Psoas muscle (tissue), 8 donors: ENCODE measurements at regions of chr21 and their contacts with region 1.

Region 1: DNA sequence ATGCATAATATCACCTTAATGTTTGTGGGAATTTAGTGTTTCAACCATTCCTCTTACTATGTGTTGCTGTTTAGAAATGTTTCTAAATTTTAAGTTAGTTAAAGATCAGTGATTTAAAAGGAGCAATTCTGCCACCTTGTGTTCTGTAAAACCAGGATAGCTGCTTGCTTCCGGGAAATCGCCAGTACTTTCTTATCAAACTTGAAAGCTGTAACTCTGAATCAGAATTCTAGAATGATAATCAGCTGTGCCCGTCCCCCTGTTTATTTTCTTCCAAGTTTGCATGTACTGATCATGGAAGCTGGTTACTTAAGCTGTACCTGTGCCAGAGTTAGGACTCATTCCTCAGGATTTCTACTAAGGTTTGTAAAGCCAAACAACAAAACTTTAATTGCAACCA is 656.4 kb downstream of the LTN1 start:
- DNase-seq: no peak
- ATAC-seq: peak in 3 of 4 donors; percentile 38 to 69 (median 43)
- H3K4me3 ChIP-seq: no peak overlapping the region
- H3K27ac ChIP-seq: no peak overlapping the region
- H3K4me1 ChIP-seq: peaks cover 5% of the 10 kb centered on the region
- H3K27me3 ChIP-seq: no peaks in the 10 kb centered on the region
- CTCF ChIP-seq: peak; percentile 61

Region 2: GRCh38 chr21:26850108-26850643 is 1486.1 kb before region 1 on chr21:
- intact Hi-C with region 1: loop called (anchors 2 to 5 kb)
- DNase-seq: no peak
- ATAC-seq: no peak
- H3K4me3 ChIP-seq: peak overlapping the region; percentile 35
- H3K27ac ChIP-seq: no peak overlapping the region
- H3K4me1 ChIP-seq: peaks cover 6% of the 10 kb centered on the region
- H3K27me3 ChIP-seq: no peaks in the 10 kb centered on the region
- CTCF ChIP-seq: peak; percentile 64

Region 3: DNA sequence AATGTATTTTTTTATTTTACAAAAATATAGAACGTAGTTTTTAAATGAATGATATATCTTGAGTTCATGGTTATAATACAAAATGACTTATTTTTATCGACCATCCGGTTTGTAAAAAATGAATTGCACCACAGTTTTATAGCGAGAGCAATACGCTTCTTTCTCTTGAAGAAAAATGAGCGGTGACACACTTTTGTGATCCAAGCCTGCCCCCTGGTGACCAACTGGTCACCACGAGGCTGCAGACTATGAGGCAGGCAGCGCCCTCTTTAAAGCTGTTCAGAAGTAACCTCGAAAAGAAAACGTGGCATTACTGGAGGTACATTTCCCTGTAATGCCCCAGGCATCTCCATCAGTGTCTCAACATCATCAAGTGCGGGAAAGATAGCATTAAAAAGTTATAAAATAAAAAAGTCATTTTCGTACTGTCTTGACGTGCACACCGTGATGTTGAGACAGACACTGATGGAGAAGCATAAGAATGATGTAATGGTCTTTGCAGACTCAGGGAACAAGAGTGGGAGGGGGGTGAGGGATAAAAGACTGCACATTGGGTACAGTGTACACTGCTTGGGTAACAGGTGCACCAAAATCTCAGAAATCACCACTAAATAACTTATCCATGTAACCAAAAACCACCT is 635.2 kb before region 1 on chr21:
- intact Hi-C with region 1: loop called in 1 of 2 experiments (anchors 5 kb)
- DNase-seq: peak; percentile 83 to 88
- ATAC-seq: peak; percentile 86 to 99 (median 93)
- H3K4me3 ChIP-seq: no peak overlapping the region
- H3K27ac ChIP-seq: no peak overlapping the region
- H3K4me1 ChIP-seq: no peaks in the 10 kb centered on the region
- H3K27me3 ChIP-seq: no peaks in the 10 kb centered on the region
- CTCF ChIP-seq: peak; percentile 95

Region 4: GRCh38 chr21:28025111-28025510 is 311.2 kb before region 1 on chr21:
- intact Hi-C with region 1: loop called in 1 of 2 experiments (anchors 10 kb)
- DNase-seq: no peak
- ATAC-seq: no peak
- H3K4me3 ChIP-seq: no peak overlapping the region
- H3K27ac ChIP-seq: no peak overlapping the region
- H3K4me1 ChIP-seq: no peaks in the 10 kb centered on the region
- H3K27me3 ChIP-seq: no peaks in the 10 kb centered on the region
- CTCF ChIP-seq: no peak

Region 5: DNA sequence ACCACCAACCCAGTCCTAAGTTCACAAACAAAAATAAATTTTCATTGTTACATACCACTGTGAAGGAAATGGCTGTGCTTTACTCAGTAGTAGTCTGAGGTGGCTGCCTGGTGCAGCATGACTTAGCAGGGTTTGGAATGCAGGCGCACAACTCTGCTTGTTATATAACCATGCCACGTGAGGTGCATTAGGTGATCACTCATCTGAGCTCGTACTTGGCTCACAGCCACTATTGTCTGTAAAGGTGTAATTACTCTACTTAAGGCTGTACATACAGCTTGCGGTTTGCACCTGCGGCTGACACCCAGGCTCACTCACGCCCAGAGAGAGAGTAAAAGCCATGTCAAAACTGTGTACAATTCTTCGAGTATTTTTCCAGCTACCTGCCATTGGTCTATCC is 57.0 kb after region 1 on chr21:
- intact Hi-C with region 1: no loop called
- DNase-seq: no peak
- ATAC-seq: peak in 1 of 4 donors; percentile 22
- H3K4me3 ChIP-seq: no peak overlapping the region
- H3K27ac ChIP-seq: no peak overlapping the region
- H3K4me1 ChIP-seq: no peaks in the 10 kb centered on the region
- H3K27me3 ChIP-seq: no peaks in the 10 kb centered on the region
- CTCF ChIP-seq: no peak

Region 6: DNA sequence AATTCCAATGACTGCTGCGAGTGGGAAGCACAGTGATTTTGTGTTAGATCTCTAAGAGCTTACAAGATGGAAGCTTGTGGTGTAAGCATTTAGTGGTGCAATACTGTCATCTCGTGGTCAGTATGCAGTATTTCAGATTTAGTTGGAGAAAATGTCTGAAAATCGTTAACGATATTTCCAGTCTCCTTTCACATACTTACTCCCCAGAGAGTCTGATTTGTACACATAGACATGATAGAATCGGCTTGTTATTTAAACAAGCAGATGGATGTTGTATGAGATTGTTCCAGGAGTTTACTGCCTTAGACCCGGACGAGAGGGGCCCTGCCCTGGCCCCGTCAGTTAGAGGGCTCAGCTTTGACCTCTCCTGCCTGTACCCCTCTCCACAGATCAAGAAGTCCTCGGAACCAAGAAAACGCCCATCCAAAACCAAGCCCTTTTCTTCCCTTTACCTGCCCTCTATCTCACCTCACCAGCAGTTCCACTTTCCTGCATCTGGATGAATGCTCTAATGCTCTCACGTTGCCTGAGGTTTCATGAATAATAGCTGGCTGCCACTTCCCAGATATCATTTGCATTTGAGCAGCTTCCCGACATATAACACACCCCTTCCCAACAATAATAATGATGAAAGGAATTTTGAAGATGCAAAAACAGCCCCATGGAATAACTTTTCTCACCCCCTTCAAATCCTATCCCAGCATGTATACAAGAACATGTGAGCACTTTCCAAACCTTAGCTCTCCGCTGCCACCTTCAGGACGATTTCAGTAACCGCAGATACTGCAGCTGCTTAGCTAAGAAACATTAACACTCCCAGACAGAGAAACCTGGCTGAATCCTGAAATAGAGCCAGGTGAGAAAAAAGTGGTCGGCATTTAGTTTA is 409.1 kb after region 1 on chr21:
- intact Hi-C with region 1: loop called (anchors 5 to 10 kb)
- DNase-seq: peak; percentile 62 to 71
- ATAC-seq: peak; percentile 90 to 97 (median 94)
- H3K4me3 ChIP-seq: peak overlapping the region; percentile 70
- H3K27ac ChIP-seq: peak overlapping the region; percentile 74
- H3K4me1 ChIP-seq: peaks cover 6% of the 10 kb centered on the region
- H3K27me3 ChIP-seq: no peaks in the 10 kb centered on the region
- CTCF ChIP-seq: peak; percentile 97